ENCODE measurements at regions of chr1 and their contacts with region 1.

Region 1: DNA sequence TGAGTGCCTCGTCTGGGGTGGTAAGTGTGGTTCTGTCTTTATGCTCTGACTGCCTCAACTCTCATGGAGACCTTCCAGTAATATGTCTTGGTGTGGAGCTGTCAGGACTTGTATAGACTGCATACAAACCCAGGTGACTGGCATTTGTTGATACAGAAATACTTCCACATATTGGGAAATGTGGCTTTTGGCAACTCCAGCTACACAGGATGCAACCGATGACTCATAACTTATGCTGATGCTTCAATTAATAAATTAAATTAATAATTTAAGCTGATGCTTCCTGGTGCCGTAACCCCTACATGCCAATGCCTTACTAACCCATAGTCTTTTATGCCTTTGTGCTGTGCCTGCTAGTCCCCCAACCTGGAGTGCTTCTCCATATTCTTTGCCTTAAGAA is 72.3 kb upstream of the ARTN start:
- DNase-seq: no peak
- ATAC-seq: no peak
- H3K4me3 ChIP-seq: no peak overlapping the region
- H3K27ac ChIP-seq: no peak overlapping the region
- H3K4me1 ChIP-seq: peaks cover 15 to 20% of the 10 kb centered on the region in 2 experiments
- H3K27me3 ChIP-seq: no peaks in the 10 kb centered on the region
- CTCF ChIP-seq: no peak
- EP300 ChIP-seq: no peak
- POLR2A ChIP-seq: no peak
- RAD21 ChIP-seq: no peak

Region 2: DNA sequence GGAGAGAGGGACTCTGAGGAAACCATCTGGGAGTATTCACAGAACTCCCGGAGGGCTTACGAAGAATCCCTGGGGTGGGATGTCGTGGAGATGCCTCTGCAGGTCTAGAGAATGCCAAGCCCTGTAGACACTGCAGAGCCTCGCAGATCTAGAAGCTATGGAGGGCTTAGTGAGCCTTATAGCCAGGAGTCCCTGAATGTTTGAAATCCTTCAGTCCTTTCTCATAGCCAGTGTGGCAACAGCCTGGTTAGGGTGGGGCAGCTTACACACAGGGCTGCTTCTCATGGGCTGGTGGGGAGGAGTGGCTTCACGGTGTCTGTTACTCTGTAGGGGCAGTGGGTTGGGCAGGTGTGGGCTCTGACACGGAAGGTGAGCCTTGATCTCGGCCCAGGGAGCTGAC is 255.6 kb before region 1 on chr1:
- CTCF ChIA-PET with region 1: no interaction called
- POLR2A ChIA-PET with region 1: no interaction called
- in situ Hi-C with region 1: no loop called
- intact Hi-C with region 1: no loop called
- DNase-seq: no peak
- ATAC-seq: no peak
- H3K4me3 ChIP-seq: no peak overlapping the region
- H3K27ac ChIP-seq: no peak overlapping the region
- H3K4me1 ChIP-seq: peaks cover 0 to 8% of the 10 kb centered on the region in 2 experiments; a peak in 1 of 5 replicates
- H3K27me3 ChIP-seq: peaks cover 75 to 98% of the 10 kb centered on the region in 2 experiments
- CTCF ChIP-seq: no peak
- EP300 ChIP-seq: no peak
- POLR2A ChIP-seq: no peak
- RAD21 ChIP-seq: no peak

Region 3: GRCh38 chr1:43789604-43790550 is 71.5 kb before region 1 on chr1:
- CTCF ChIA-PET with region 1: no interaction called
- POLR2A ChIA-PET with region 1: no interaction called
- in situ Hi-C with region 1: no loop called
- intact Hi-C with region 1: no loop called
- DNase-seq: no peak
- ATAC-seq: no peak
- H3K4me3 ChIP-seq: no peak overlapping the region
- H3K27ac ChIP-seq: no peak overlapping the region
- H3K4me1 ChIP-seq: no peaks in the 10 kb centered on the region
- H3K27me3 ChIP-seq: no peaks in the 10 kb centered on the region
- CTCF ChIP-seq: no peak
- EP300 ChIP-seq: no peak
- POLR2A ChIP-seq: no peak
- RAD21 ChIP-seq: no peak

Region 4: GRCh38 chr1:43847290-43847689 is 14.0 kb before region 1 on chr1:
- CTCF ChIA-PET with region 1: no interaction called
- POLR2A ChIA-PET with region 1: interaction called, 14 read pairs
- in situ Hi-C with region 1: no loop called
- intact Hi-C with region 1: no loop called
- DNase-seq: no peak
- ATAC-seq: no peak
- H3K4me3 ChIP-seq: no peak overlapping the region
- H3K27ac ChIP-seq: no peak overlapping the region
- H3K4me1 ChIP-seq: peaks cover 0 to 2% of the 10 kb centered on the region in 2 experiments; a peak in 1 of 5 replicates
- H3K27me3 ChIP-seq: no peaks in the 10 kb centered on the region
- CTCF ChIP-seq: no peak
- EP300 ChIP-seq: no peak
- POLR2A ChIP-seq: no peak
- RAD21 ChIP-seq: no peak

Measured in K562 (cell line).